ENCODE measurements at regions of chr10 and their contacts with region 1.

Region 1: GRCh38 chr10:62268399-62269114 is at the start of gene RTKN2:
- H3K4me3 Mint-ChIP-seq: peak within 1 kb of the TSS; percentile 75
- H3K27ac Mint-ChIP-seq: peak within 1 kb of the TSS; percentile 37
- H3K4me1 Mint-ChIP-seq: peaks cover 30% of the 10 kb centered on the region
- H3K27me3 Mint-ChIP-seq: peaks cover 25% of the 10 kb centered on the region

Region 2: GRCh38 chr10:61592581-61592980 is 676.0 kb before region 1 on chr10:
- intact Hi-C with region 1: no loop called
- H3K4me3 Mint-ChIP-seq: no peak overlapping the region
- H3K27ac Mint-ChIP-seq: no peak overlapping the region
- H3K4me1 Mint-ChIP-seq: peaks cover 7% of the 10 kb centered on the region
- H3K27me3 Mint-ChIP-seq: no peaks in the 10 kb centered on the region

Region 3: DNA sequence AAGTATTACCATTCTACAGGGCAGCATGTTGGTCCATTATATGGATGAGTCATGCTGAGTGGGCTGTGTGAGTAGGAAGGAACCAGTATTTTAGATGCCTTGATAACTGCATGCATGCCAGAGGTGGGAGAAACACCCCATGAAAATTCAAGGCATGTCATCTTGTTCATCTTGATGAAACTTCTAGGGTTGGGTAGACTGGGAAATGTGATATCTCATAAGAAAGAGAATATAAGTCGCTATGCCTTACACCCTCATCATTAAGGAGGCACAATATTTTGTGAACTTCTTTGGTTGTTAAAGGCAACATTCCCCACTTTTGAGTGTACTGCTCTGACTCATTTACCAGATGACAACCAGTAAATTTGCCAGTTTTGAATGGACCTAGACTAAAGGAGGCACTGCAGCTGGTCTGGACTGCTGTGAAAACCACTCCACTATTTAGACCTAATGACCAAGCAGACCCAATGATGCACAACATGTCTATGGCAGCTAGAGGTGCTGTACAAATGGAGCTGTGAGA is 153.6 kb after region 1 on chr10:
- intact Hi-C with region 1: loop called (anchors 10 kb)
- H3K4me3 Mint-ChIP-seq: no peak overlapping the region
- H3K27ac Mint-ChIP-seq: no peak overlapping the region
- H3K4me1 Mint-ChIP-seq: peaks cover 11% of the 10 kb centered on the region
- H3K27me3 Mint-ChIP-seq: peaks cover 8% of the 10 kb centered on the region